HEK293 (cell line): ENCODE measurements at regions of chr19 and their contacts with region 1.

Region 1: DNA sequence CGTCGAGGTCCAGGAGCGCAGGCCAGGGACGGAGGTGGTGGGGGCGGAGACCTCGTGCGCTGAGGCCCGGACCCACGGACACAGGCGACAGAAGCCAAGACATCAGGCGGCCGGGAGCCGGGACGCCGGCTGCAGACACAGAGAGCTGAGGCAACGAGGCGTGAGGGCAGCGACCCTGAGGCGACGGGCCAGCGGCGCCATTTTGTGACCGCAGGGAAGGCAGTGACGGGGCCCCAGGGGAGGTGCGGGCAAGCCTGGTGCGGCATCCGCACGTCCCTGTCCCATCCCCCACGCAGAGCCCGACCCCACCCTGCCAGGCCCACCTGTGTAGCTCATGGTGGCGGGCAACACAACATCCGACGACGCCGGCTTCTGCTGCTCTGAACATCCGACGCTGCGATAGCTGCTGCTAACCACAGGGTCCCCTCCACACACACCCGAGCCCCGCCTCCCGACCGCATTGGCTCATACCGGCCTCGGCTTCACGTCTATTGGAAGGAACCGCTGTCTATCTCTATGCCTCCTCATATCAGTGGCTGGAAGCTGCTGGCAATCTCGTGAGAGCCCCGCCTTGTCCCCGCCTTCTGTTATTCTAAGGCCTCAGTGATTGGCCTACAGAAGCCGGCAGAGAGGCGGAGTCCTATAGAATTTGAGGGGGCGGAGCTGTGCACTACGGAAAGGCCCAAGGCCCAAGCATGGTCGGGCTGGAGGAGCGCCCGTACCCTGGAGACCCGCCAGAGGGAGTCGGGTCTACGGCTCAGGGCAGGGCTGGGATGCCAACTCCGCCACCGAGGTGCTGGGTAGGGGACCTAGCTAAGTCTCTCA is at the start of gene AKAP8L:
- H3K4me3 ChIP-seq: peak within 1 kb of the TSS; percentile 92
- H3K27ac ChIP-seq: peak within 1 kb of the TSS; percentile 98
- H3K4me1 ChIP-seq: peaks cover 16% of the 10 kb centered on the region
- CTCF ChIP-seq: peak; percentile 45

Region 2: GRCh38 chr19:15379083-15379995 is 39.5 kb before region 1 on chr19 and contains the start of gene AKAP8:
- CTCF ChIA-PET with region 1: interaction called, 6 read pairs
- POLR2A ChIA-PET with region 1: interaction called, 94 read pairs
- H3K4me3 ChIP-seq: peak within 1 kb of the TSS; percentile 98
- H3K27ac ChIP-seq: peak within 1 kb of the TSS; percentile 89
- H3K4me1 ChIP-seq: peaks cover 6% of the 10 kb centered on the region
- CTCF ChIP-seq: no peak

Region 3: GRCh38 chr19:15432629-15433518 is 14.1 kb after region 1 on chr19:
- CTCF ChIA-PET with region 1: interaction called, 13 read pairs
- POLR2A ChIA-PET with region 1: interaction called, 27 read pairs
- H3K4me3 ChIP-seq: peak overlapping the region; percentile 95
- H3K27ac ChIP-seq: peak overlapping the region; percentile 68
- H3K4me1 ChIP-seq: peaks cover 7% of the 10 kb centered on the region
- CTCF ChIP-seq: no peak

Region 4: DNA sequence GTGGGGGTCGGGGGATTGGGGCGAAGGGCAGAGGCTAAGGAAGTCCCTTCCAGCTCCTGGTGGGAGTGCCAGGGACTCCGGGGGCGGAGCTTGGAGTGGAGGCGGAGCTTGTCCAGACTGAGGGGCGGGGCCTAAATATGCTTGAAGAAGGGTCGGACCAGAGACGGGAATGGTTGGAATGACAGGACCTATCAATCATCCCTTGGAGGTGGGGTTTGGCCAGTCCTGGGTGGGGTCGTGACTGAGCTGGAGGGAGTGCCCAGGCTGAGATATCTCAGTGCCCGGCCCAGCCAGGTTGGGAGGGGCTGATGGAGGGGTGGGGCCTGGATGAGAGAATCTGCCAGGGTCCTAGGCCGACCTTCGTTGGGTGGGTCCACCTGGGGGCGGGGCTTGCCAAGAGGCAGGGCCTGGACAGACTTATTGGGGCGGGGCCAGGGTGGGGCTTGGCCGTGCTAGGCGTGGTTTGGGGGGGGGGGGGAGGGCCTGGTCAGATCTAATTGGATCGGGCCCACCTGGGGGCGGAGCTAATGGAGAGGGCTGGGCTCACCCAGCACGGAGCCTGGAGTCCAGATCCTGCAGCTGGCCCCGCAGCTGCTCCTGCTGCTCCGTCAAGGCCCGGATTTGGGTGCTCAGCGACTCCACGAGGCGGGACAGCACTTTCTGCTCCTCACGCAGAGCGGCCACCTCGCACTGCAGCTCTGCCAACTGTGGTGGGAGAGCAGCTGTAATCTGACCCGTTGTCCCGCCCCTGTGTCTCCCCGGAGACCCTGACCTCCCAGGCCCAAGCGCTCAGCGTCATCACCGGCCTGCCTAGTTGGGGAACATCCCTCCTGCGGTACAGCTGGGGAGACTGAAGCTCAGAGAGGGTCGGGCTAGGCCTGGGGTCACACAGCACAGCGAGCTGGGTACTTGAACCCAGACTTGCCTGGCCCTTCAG is 33.6 kb after region 1 on chr19:
- CTCF ChIA-PET with region 1: interaction called, 6 read pairs
- POLR2A ChIA-PET with region 1: interaction called, 22 read pairs
- H3K4me3 ChIP-seq: no peak overlapping the region
- H3K27ac ChIP-seq: no peak overlapping the region
- H3K4me1 ChIP-seq: peaks cover 2% of the 10 kb centered on the region; the same call in 1 of the 2 replicates
- CTCF ChIP-seq: no peak

Region 5: DNA sequence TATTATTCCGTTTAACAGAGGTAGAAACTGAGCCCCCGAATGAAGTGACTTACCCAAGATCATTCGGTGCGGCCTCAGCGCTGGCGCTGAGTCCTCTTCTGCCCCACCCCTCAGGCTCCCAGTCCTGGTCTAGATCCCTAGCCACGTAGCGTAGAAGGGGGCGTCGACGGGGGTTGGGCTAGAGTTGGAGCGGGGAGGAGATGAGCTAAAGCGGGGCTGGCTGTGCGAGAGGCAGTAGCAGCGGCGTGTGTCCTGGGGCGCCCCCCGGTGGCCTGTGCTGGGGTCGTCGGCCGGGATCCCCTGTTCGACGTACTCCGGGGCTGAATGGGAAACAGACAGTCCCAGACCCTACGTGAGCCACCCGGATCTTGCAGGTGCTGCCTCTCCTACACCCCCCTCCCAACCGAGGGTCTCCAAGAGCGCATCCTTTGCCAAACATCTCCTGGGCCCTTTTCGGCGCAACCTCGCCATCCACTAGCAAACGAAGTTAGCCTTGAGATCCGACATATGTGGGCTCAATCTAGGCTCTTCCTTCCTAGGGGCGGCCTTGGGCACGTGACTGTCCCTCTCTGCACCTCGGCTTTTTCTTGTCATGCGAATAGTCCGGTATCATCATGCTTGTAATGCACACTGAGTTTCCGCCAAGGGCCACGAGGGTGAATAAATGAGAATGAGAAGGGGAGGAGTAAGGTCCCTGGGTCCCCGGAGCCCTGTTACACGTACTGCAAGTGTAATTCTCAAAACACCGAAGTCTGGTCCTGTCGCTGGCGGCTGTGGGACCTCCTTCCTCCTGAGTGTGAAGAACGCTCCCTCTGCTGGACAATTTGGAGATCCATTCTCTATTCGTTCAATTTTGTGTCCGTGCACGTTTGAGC is 137.2 kb after region 1 on chr19:
- CTCF ChIA-PET with region 1: interaction called, 27 read pairs
- POLR2A ChIA-PET with region 1: interaction called, 17 read pairs
- H3K4me3 ChIP-seq: peak overlapping the region; percentile 20
- H3K27ac ChIP-seq: no peak overlapping the region
- H3K4me1 ChIP-seq: peaks cover 2% of the 10 kb centered on the region; the same call in 1 of the 2 replicates
- CTCF ChIP-seq: peak; percentile 84

Region 6: GRCh38 chr19:15614507-15615379 is 195.9 kb after region 1 on chr19 and contains the start of gene CYP4F8:
- CTCF ChIA-PET with region 1: no interaction called
- POLR2A ChIA-PET with region 1: no interaction called
- H3K4me3 ChIP-seq: no peak within 1 kb of the TSS
- H3K27ac ChIP-seq: no peak within 1 kb of the TSS
- H3K4me1 ChIP-seq: no peaks in the 10 kb centered on the region
- CTCF ChIP-seq: no peak

Region 7: DNA sequence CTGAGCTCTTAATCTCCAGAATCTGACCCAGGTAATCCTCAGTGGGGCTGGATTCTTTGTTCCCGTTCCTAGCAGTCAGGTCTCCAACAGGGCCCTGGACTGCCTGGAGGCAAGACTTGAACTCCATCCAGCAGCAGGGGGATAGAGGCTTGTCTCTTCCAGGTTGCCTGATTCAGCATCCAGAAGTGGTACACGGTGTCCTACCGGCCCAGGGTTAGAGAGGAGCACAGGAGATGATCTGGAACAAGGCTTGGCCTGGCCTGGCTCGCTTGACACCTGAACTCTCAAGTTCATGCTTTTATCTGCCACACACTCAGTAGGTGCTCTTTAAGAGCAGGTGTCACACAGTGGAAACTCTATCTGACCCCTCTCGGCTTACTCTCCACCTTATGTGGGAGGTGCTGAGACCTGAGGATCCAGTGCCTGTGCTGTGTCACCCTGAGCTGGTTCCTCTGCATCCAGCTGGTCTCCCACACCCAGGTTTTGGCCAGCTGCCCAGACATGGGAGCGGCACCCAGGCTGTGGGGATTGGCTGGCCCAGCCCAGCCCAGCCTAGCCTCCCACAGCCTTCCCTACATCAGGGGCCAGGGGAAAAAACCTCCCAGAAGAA is 221.6 kb after region 1 on chr19 and contains the start of gene CYP4F3:
- CTCF ChIA-PET with region 1: no interaction called
- POLR2A ChIA-PET with region 1: no interaction called
- H3K4me3 ChIP-seq: no peak within 1 kb of the TSS
- H3K27ac ChIP-seq: no peak within 1 kb of the TSS
- H3K4me1 ChIP-seq: no peaks in the 10 kb centered on the region
- CTCF ChIP-seq: no peak

Region 8: GRCh38 chr19:15730538-15730937 is 311.7 kb after region 1 on chr19:
- CTCF ChIA-PET with region 1: no interaction called
- POLR2A ChIA-PET with region 1: no interaction called
- H3K4me3 ChIP-seq: no peak overlapping the region
- H3K27ac ChIP-seq: no peak overlapping the region
- H3K4me1 ChIP-seq: no peaks in the 10 kb centered on the region
- CTCF ChIP-seq: no peak